ENCODE measurements at regions of chr3 and their contacts with region 1.

Region 1: GRCh38 chr3:187319699-187320302 is 28.3 kb upstream of the MASP1 start:
- DNase-seq: peak; percentile 32 to 86 (median 65)
- H3K4me3 ChIP-seq: peak overlapping the region in 25 of 59 donors; percentile 25 to 64 (median 50)
- H3K27ac ChIP-seq: no peak overlapping the region
- H3K27me3 ChIP-seq: peaks cover 0 to 16% (median 0%) of the 10 kb centered on the region in 45 donors
- CTCF ChIP-seq: peak; percentile 52 to 97 (median 89)

Region 2: GRCh38 chr3:186821429-186822367 is 498.1 kb before region 1 on chr3:
- intact Hi-C with region 1: no loop called
- DNase-seq: no peak
- H3K4me3 ChIP-seq: peak overlapping the region in 2 of 59 donors; percentile 13 to 14
- H3K27ac ChIP-seq: peak overlapping the region in 1 of 59 donors; percentile 9
- H3K27me3 ChIP-seq: no peaks in the 10 kb centered on the region
- CTCF ChIP-seq: peak in 55 of 56 donors; percentile 40 to 84 (median 69)

Region 3: GRCh38 chr3:187679638-187680396 is 360.0 kb after region 1 on chr3:
- intact Hi-C with region 1: loop called (anchors 1 kb)
- DNase-seq: peak; percentile 43 to 83 (median 70)
- H3K4me3 ChIP-seq: no peak overlapping the region
- H3K27ac ChIP-seq: no peak overlapping the region
- H3K27me3 ChIP-seq: peaks cover 0 to 19% (median 3%) of the 10 kb centered on the region in 45 donors
- CTCF ChIP-seq: peak; percentile 62 to 98 (median 94)

Region 4: GRCh38 chr3:187714404-187714979 is 394.7 kb after region 1 on chr3:
- intact Hi-C with region 1: loop called in 1 of 2 experiments (anchors 10 kb)
- DNase-seq: peak in 8 of 10 donors; percentile 62 to 81 (median 70)
- H3K4me3 ChIP-seq: no peak overlapping the region
- H3K27ac ChIP-seq: no peak overlapping the region
- H3K27me3 ChIP-seq: no peaks in the 10 kb centered on the region
- CTCF ChIP-seq: peak; percentile 68 to 98 (median 92)

Measured in dorsolateral prefrontal cortex (tissue), 120 donors.